ENCODE measurements at regions of chr15 and their contacts with region 1.

Region 1: GRCh38 chr15:78811124-78811824 is at the start of gene ADAMTS7:
- DNase-seq: peak; percentile 49 to 95
- H3K4me3 ChIP-seq: peak within 1 kb of the TSS; percentile 71 to 99 (median 85)
- H3K27ac ChIP-seq: no peak within 1 kb of the TSS; the same call in 1 of the 2 replicates
- H3K4me1 ChIP-seq: peaks cover 7 to 14% (median 10%) of the 10 kb centered on the region in 4 experiments
- H3K27me3 ChIP-seq: peaks cover 0 to 10% (median 6%) of the 10 kb centered on the region in 4 experiments; a peak in 5 of 7 replicates
- CTCF ChIP-seq: peak; percentile 47 to 87 (median 65)
- EP300 ChIP-seq: 0 out of 3 replicates have a peak, but pooled peaks of 1 of the 2 experiments have one; percentile 10
- POLR2A ChIP-seq: no peak; a peak in 2 of 3 replicates
- RAD21 ChIP-seq: peak in 1 of 2 experiments; percentile 37; a peak in 2 of 4 replicates
- total RNA-seq, gene ADAMTS7: 43.1 and 45.2 TPM in 2 replicates

Region 2: GRCh38 chr15:78750566-78750965 is 60.7 kb before region 1 on chr15:
- CTCF ChIA-PET with region 1: interaction called, 82 read pairs
- POLR2A ChIA-PET with region 1: no interaction called
- DNase-seq: no peak
- H3K4me3 ChIP-seq: 0 out of 8 replicates have a peak overlapping the region, but pooled peaks of 1 of the 4 experiments have one; percentile 32
- H3K27ac ChIP-seq: no peak overlapping the region
- H3K4me1 ChIP-seq: no peaks in the 10 kb centered on the region
- H3K27me3 ChIP-seq: no peaks in the 10 kb centered on the region
- CTCF ChIP-seq: no peak
- EP300 ChIP-seq: no peak
- POLR2A ChIP-seq: no peak
- RAD21 ChIP-seq: no peak

Region 3: GRCh38 chr15:78763796-78764241 is 47.5 kb before region 1 on chr15:
- CTCF ChIA-PET with region 1: interaction called, 82 read pairs
- POLR2A ChIA-PET with region 1: interaction called, 3 read pairs
- DNase-seq: peak in 1 of 2 experiments; percentile 46
- H3K4me3 ChIP-seq: no peak overlapping the region
- H3K27ac ChIP-seq: no peak overlapping the region; the same call in 1 of the 2 replicates
- H3K4me1 ChIP-seq: peaks cover 0 to 10% (median 4%) of the 10 kb centered on the region in 4 experiments; a peak in 6 of 7 replicates
- H3K27me3 ChIP-seq: no peaks in the 10 kb centered on the region
- CTCF ChIP-seq: no peak
- EP300 ChIP-seq: no peak
- POLR2A ChIP-seq: no peak
- RAD21 ChIP-seq: no peak

Region 4: GRCh38 chr15:78795670-78796069 is 15.6 kb before region 1 on chr15:
- CTCF ChIA-PET with region 1: interaction called, 20 read pairs
- POLR2A ChIA-PET with region 1: no interaction called
- DNase-seq: no peak
- H3K4me3 ChIP-seq: no peak overlapping the region
- H3K27ac ChIP-seq: no peak overlapping the region
- H3K4me1 ChIP-seq: no peaks in the 10 kb centered on the region
- H3K27me3 ChIP-seq: no peaks in the 10 kb centered on the region
- CTCF ChIP-seq: peak in 1 of 3 experiments; percentile 13; a peak in 1 of 4 replicates
- EP300 ChIP-seq: no peak
- POLR2A ChIP-seq: no peak
- RAD21 ChIP-seq: no peak

Region 5: DNA sequence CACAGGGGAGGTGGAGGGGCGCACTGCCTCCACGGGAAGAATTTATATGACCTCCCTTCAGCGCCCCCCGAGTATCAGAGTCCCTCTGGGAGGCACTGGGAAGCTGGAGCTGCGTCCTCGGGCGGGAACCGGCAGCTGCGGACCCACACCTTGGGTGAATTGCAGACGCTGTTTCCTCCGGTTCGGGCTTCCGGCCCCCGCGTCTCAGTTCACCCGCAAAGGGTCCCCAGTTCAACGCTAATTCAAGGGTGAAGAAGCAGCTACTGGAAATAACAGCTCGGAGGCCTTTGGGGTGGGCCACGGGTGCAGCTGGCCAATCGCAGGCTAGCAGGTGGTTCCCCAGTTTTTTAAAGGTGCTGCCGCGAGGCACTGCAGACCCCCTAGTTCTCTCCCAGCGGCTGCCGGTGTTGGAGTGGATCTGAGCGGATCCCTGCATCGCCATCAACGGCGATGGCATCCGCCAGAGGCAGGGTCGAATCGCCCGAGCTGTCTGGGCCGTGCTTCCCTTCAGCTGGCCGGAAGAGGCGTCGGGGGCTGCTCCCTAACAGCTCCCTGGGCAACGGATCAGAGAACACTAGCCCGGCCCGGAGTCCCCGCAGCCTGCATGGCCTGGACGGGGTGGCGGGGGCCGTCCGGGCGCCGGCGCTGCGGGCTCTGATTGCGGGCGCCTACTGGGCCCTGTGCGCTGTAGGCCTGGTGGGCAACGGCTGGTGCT is 19.4 kb after region 1 on chr15:
- CTCF ChIA-PET with region 1: interaction called, 19 read pairs
- POLR2A ChIA-PET with region 1: interaction called, 3 read pairs
- DNase-seq: peak in 1 of 2 experiments; percentile 49
- H3K4me3 ChIP-seq: no peak overlapping the region
- H3K27ac ChIP-seq: no peak overlapping the region
- H3K4me1 ChIP-seq: no peaks in the 10 kb centered on the region
- H3K27me3 ChIP-seq: no peaks in the 10 kb centered on the region
- CTCF ChIP-seq: no peak
- EP300 ChIP-seq: no peak
- POLR2A ChIP-seq: no peak
- RAD21 ChIP-seq: no peak

Region 6: DNA sequence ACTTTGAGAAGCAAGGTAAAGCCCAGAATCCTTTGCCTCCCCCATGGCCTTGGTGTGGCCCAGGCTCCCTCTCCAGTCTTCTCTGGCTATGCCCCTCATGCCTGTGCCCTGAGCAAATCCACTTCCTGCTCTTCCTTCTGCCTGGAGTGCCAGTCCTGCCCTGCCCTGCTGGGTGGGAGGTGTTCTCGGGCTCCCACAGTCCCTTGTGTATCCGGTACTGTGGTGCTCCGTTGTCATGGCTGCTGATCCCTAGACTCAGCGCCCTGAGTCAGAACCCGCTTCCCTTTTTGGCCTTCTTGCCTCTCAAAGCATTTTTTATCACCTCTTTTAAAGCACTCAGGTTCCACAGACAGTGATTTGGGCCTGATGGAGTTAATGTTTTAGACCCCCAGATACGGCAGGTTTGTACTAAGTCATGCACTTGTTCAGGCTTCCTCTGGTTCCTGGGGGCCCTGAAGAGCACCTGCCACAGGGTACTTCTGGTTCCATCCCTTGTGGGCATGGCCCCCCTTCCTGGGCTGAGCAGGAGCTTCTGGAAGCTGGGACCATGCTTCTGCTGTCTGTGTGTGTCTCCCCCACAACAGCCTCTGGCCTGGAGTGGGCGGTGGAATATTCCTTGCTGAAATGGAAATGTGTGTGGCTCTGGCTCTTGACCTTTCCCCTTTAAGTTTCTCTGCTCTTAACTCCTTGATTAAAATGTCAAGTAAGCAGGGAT is 29.5 kb after region 1 on chr15:
- CTCF ChIA-PET with region 1: interaction called, 17 read pairs
- POLR2A ChIA-PET with region 1: no interaction called
- DNase-seq: no peak
- H3K4me3 ChIP-seq: no peak overlapping the region
- H3K27ac ChIP-seq: no peak overlapping the region
- H3K4me1 ChIP-seq: peaks cover 0 to 3% (median 0%) of the 10 kb centered on the region in 4 experiments; a peak in 1 of 7 replicates
- H3K27me3 ChIP-seq: no peaks in the 10 kb centered on the region
- CTCF ChIP-seq: no peak
- EP300 ChIP-seq: no peak
- POLR2A ChIP-seq: no peak
- RAD21 ChIP-seq: no peak

Region 7: GRCh38 chr15:78872972-78873792 is 61.9 kb after region 1 on chr15:
- CTCF ChIA-PET with region 1: interaction called, 7 read pairs
- POLR2A ChIA-PET with region 1: interaction called, 36 read pairs
- DNase-seq: peak; percentile 79 to 89
- H3K4me3 ChIP-seq: peak overlapping the region; percentile 97 to 100 (median 99)
- H3K27ac ChIP-seq: peak overlapping the region; percentile 100
- H3K4me1 ChIP-seq: peaks cover 1 to 11% (median 7%) of the 10 kb centered on the region in 4 experiments; a peak in 3 of 7 replicates
- H3K27me3 ChIP-seq: no peaks in the 10 kb centered on the region
- CTCF ChIP-seq: peak; percentile 57 to 76 (median 60)
- EP300 ChIP-seq: peak; percentile 7 to 55; a peak in 1 of 3 replicates
- POLR2A ChIP-seq: peak; percentile 88 to 91
- RAD21 ChIP-seq: peak; percentile 13 to 35; a peak in 3 of 4 replicates

Region 8: DNA sequence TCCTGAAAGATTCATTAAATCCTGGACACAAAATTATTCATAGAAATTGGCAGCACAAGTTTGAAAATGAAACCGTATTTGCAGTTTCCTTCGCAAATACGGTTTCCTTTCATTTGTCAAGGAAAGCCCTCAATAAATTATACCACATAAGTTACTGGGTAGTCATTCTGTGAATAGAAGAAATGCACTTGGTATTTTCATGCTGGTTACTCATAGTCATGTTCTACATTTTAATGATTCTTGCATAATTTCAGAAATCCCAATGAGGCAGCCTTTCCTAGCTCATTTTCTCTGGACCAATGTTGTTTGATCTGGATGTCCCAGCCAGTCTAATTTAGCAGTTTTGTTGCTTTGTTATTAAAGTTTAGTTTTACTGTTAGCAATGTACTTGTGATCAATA is 664.0 kb after region 1 on chr15:
- CTCF ChIA-PET with region 1: no interaction called
- POLR2A ChIA-PET with region 1: no interaction called
- DNase-seq: no peak
- H3K4me3 ChIP-seq: no peak overlapping the region
- H3K27ac ChIP-seq: no peak overlapping the region
- H3K4me1 ChIP-seq: no peaks in the 10 kb centered on the region
- H3K27me3 ChIP-seq: no peaks in the 10 kb centered on the region
- CTCF ChIP-seq: no peak
- EP300 ChIP-seq: no peak
- POLR2A ChIP-seq: no peak
- RAD21 ChIP-seq: no peak

Measured in H1 (cell line).